ENCODE measurements at regions of chr18 and their contacts with region 1.

Region 1: DNA sequence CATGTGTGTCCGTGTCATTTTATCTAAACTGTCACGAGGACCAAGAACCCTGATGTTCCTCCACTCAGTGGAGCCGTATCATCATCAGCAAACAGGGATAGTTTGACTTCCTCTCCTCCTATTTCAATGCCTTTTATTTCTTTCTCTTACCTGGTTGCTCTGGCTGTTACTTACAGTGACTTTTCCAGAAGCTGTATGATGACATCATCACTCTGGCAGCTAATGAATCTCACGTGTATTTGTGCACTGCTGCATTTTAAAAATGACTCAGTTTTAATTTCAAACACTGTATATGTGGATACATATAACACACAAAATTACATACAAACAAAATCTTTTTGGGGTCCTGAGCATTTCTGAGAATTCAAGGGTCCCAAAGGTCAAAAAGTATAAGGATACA is 481.4 kb downstream of the CDH2 start:
- DNase-seq: no peak
- ATAC-seq: no peak
- H3K4me3 ChIP-seq: no peak overlapping the region
- H3K27ac ChIP-seq: no peak overlapping the region
- H3K4me1 ChIP-seq: no peaks in the 10 kb centered on the region
- H3K27me3 ChIP-seq: no peaks in the 10 kb centered on the region
- CTCF ChIP-seq: no peak
- POLR2A ChIP-seq: no peak

Region 2: GRCh38 chr18:27473318-27473717 is 222.2 kb before region 1 on chr18:
- intact Hi-C with region 1: no loop called
- DNase-seq: no peak
- ATAC-seq: no peak
- H3K4me3 ChIP-seq: no peak overlapping the region
- H3K27ac ChIP-seq: no peak overlapping the region
- H3K4me1 ChIP-seq: no peaks in the 10 kb centered on the region
- H3K27me3 ChIP-seq: no peaks in the 10 kb centered on the region
- CTCF ChIP-seq: no peak
- POLR2A ChIP-seq: no peak

Region 3: DNA sequence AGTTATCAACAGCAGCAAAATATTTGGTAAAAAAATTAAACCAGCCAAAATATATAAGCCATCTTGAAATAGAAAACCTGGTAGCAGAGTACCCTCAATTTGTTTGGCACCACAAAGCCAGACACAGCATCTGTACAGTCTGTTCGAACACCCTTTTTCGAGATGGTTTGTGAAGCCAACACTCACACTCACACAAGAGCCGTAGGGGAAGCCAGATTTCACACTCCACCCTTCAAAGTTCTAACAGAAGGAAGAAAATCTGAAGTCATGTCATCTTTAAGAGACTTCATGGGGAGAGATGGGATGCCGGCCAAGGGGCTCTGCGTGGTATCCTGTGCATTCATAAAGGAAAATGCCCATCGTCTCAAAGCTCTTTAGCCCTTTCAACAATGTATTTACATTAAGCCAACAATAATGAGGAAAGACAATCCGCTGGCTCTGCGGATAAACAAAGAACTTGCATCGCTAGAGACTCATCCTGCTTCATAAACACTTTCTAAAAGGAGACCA is 58.9 kb before region 1 on chr18:
- intact Hi-C with region 1: loop called in 1 of 10 experiments (anchors 10 kb)
- DNase-seq: no peak
- ATAC-seq: no peak
- H3K4me3 ChIP-seq: no peak overlapping the region
- H3K27ac ChIP-seq: no peak overlapping the region
- H3K4me1 ChIP-seq: no peaks in the 10 kb centered on the region
- H3K27me3 ChIP-seq: no peaks in the 10 kb centered on the region
- CTCF ChIP-seq: no peak
- POLR2A ChIP-seq: no peak

Region 4: DNA sequence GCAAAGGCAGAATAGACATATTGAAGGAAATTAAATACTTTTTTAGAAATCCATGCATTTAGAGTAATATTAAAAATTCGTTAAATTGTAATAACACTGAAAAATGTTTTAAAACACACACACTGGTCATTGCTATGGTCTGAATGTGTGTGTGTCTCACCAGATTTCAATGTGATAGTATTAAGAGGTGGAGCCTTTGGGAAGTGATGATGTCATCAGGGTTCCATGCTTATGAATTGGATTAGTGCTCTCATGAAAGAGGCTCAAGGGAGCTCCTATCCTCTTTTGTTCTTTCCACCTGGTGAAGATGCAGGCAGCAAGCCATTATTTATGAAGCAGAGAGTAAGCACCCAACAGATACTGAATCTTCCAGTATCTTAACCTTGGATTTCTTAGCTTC is 39.6 kb after region 1 on chr18:
- intact Hi-C with region 1: no loop called
- DNase-seq: no peak
- ATAC-seq: no peak
- H3K4me3 ChIP-seq: no peak overlapping the region
- H3K27ac ChIP-seq: no peak overlapping the region
- H3K4me1 ChIP-seq: no peaks in the 10 kb centered on the region
- H3K27me3 ChIP-seq: no peaks in the 10 kb centered on the region
- CTCF ChIP-seq: no peak
- POLR2A ChIP-seq: no peak

Measured in heart left ventricle (tissue), 16 donors.